ENCODE measurements at regions of chr16 and their contacts with region 1.

Region 1: GRCh38 chr16:87636072-87636684 is 33.9 kb downstream of the JPH3 start:
- DNase-seq: peak; percentile 83 to 89 (median 84)
- ATAC-seq: peak; percentile 98
- H3K4me3 ChIP-seq: no peak overlapping the region
- H3K27ac ChIP-seq: no peak overlapping the region
- H3K4me1 ChIP-seq: peaks cover 0 to 18% of the 10 kb centered on the region in 2 experiments; a peak in 3 of 5 replicates
- H3K27me3 ChIP-seq: peaks cover 36 to 79% of the 10 kb centered on the region in 2 experiments
- CTCF ChIP-seq: peak; percentile 83 to 88 (median 88)
- EP300 ChIP-seq: no peak
- POLR2A ChIP-seq: no peak
- RAD21 ChIP-seq: peak; percentile 86 to 92

Region 2: DNA sequence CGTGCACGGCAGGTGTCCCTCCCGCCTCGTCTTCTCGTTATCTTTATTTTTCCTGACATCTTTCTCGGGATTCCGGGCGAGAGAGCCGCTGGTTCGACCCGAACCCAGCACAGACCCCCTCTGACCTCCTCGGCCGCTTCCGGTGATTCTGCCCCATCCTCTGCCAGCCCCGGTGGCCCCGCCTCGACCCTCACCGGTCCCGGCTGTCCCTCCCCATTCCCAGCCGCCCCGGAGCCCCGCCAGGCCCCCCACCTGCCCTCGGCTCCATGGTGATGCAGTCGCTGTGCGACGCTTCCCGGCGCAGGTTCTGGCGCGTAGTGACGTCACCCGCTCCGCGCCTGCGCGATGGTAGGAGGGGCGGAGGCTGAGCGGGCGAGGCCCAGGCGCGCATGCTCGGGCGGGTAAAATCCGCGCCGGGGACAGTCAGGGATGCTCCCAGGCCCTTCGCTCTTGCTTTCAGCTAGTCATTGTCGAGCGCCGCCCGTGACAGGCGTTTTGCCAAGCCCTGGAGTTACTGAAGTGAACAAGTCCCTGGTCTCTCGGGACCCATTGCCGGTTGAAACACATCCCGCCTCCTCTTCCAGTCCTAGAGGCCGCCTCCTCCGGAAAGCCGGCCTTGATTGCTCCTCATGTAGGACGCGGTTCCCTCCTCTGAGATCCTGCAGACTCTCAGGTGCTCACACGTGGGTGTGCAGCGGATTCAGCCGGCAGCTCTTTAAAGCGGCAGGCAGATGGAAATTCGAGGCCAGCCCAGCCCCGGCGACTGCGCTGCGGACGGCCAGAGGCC is 1081.1 kb before region 1 on chr16 and contains the start of gene MTHFSD:
- CTCF ChIA-PET with region 1: no interaction called
- POLR2A ChIA-PET with region 1: no interaction called
- in situ Hi-C with region 1: loop called (anchors 25 kb)
- intact Hi-C with region 1: loop called (anchors 5 kb)
- DNase-seq: peak; percentile 94 to 99 (median 98)
- ATAC-seq: peak; percentile 97
- H3K4me3 ChIP-seq: peak within 1 kb of the TSS; percentile 91
- H3K27ac ChIP-seq: peak within 1 kb of the TSS; percentile 85
- H3K4me1 ChIP-seq: peaks cover 0 to 18% of the 10 kb centered on the region in 2 experiments; a peak in 3 of 5 replicates
- H3K27me3 ChIP-seq: peaks cover 14 to 15% of the 10 kb centered on the region in 2 experiments; a peak in 3 of 5 replicates
- CTCF ChIP-seq: no peak
- EP300 ChIP-seq: no peak
- POLR2A ChIP-seq: peak; percentile 81
- RAD21 ChIP-seq: no peak
- polyA plus RNA-seq, gene MTHFSD: 3.2 to 3.5 TPM

Region 3: DNA sequence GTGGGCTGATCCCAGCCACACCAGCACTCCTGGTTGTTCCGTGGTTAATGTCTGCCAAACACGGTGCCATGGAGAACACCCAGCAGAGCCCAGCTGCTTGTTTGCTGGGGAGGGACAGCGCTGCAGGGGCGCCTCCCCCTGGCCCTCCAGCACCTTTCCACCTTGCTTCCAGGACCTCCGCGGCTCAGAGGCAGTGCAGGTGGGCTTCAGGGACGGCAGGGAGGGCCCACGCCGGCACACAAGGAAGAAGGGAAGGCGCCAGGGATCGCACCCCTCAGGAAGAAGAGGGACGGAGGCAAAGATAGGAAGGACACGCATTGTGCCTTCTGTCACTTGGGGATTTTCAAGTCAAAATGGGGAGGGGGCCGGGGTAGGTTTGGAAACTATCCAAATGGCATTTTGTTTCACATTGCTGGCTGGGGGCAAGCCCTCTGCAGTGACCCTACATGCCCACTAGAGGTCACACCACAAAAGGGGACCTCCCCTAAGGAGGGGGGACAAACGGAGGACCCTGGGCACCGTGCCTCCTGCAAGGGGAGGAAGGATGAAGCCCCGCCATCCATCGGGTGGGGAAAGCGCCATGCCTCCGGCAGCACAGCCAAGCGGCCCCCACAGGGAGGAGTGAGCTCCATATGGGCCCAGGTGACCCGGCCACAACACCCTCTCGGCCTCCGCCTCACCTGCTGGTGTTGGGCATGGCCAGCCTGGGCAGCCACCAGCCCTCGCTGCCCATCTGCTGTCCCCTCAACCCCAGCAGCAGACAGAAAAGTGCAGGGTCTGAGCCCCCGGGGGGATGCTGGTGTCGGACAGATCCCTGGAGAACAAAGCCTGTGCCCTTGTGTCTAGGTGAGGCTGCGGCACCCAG is 311.5 kb before region 1 on chr16:
- CTCF ChIA-PET with region 1: no interaction called
- POLR2A ChIA-PET with region 1: no interaction called
- in situ Hi-C with region 1: no loop called
- intact Hi-C with region 1: loop called (anchors 10 kb)
- DNase-seq: peak; percentile 48 to 79 (median 76)
- ATAC-seq: peak; percentile 82
- H3K4me3 ChIP-seq: no peak overlapping the region
- H3K27ac ChIP-seq: no peak overlapping the region
- H3K4me1 ChIP-seq: peaks cover 0 to 31% of the 10 kb centered on the region in 2 experiments; a peak in 2 of 5 replicates
- H3K27me3 ChIP-seq: no peaks in the 10 kb centered on the region
- CTCF ChIP-seq: peak; percentile 67 to 90 (median 81)
- EP300 ChIP-seq: no peak
- POLR2A ChIP-seq: no peak
- RAD21 ChIP-seq: peak; percentile 43 to 72

Region 4: DNA sequence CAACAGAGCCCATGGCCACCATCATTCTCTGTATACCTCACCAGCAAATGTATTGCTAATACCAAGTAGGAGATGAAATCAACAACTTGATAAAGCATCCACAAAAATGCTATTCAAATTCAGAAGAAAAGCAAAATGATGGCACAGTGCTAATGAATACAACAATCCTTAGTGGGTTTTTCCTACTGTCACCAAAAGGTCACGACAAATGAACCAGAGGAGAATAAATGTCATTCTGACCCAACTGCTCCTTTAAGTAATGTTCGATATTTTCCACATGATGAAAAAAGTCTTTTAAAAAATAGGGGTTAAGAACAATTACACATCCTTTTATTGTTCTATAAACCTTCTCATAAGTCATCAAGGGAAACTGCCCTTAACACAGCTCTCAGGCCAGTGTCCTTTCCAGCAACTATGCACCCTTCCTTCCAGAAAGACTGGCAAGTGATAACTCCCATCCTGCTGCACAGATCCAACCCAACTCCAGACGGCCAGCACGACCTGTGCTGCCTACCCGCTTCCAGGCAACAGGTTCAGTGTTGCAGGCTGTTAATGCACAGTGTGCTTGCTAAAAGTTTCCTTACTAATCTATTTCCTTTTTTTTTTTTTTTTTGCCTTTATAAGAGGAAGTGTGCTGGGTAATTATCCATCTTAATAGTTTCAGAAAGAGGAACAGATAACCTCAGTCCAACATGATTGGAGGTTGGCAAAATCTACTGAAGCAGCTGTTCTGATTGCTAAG is 268.0 kb before region 1 on chr16:
- CTCF ChIA-PET with region 1: no interaction called
- POLR2A ChIA-PET with region 1: no interaction called
- in situ Hi-C with region 1: no loop called
- intact Hi-C with region 1: no loop called
- DNase-seq: no peak
- ATAC-seq: no peak
- H3K4me3 ChIP-seq: no peak overlapping the region
- H3K27ac ChIP-seq: no peak overlapping the region
- H3K4me1 ChIP-seq: peaks cover 17 to 27% of the 10 kb centered on the region in 2 experiments
- H3K27me3 ChIP-seq: no peaks in the 10 kb centered on the region
- CTCF ChIP-seq: no peak
- EP300 ChIP-seq: no peak
- POLR2A ChIP-seq: no peak
- RAD21 ChIP-seq: no peak

Region 5: GRCh38 chr16:87416826-87417527 is 219.2 kb before region 1 on chr16:
- CTCF ChIA-PET with region 1: interaction called, 17 read pairs
- POLR2A ChIA-PET with region 1: no interaction called
- in situ Hi-C with region 1: no loop called
- intact Hi-C with region 1: no loop called
- DNase-seq: peak in 1 of 4 experiments; percentile 27
- ATAC-seq: no peak
- H3K4me3 ChIP-seq: no peak overlapping the region
- H3K27ac ChIP-seq: no peak overlapping the region
- H3K4me1 ChIP-seq: peaks cover 0 to 4% of the 10 kb centered on the region in 2 experiments; a peak in 2 of 5 replicates
- H3K27me3 ChIP-seq: no peaks in the 10 kb centered on the region; a peak in 1 of 5 replicates
- CTCF ChIP-seq: peak; percentile 32 to 63 (median 49); a peak in 4 of 6 replicates
- EP300 ChIP-seq: no peak
- POLR2A ChIP-seq: no peak
- RAD21 ChIP-seq: peak; percentile 42 to 65; a peak in 3 of 4 replicates

Region 6: GRCh38 chr16:87586201-87586782 is 49.9 kb before region 1 on chr16:
- CTCF ChIA-PET with region 1: interaction called, 22 read pairs
- POLR2A ChIA-PET with region 1: interaction called, 4 read pairs
- in situ Hi-C with region 1: loop called (anchors 5 kb)
- intact Hi-C with region 1: loop called (anchors 2 kb)
- DNase-seq: peak in 1 of 4 experiments; percentile 41
- ATAC-seq: peak; percentile 34
- H3K4me3 ChIP-seq: no peak overlapping the region
- H3K27ac ChIP-seq: no peak overlapping the region
- H3K4me1 ChIP-seq: peaks cover 18 to 31% of the 10 kb centered on the region in 2 experiments; a peak in 4 of 5 replicates
- H3K27me3 ChIP-seq: peaks cover 50 to 82% of the 10 kb centered on the region in 2 experiments
- CTCF ChIP-seq: no peak
- EP300 ChIP-seq: no peak
- POLR2A ChIP-seq: no peak
- RAD21 ChIP-seq: no peak

Region 7: DNA sequence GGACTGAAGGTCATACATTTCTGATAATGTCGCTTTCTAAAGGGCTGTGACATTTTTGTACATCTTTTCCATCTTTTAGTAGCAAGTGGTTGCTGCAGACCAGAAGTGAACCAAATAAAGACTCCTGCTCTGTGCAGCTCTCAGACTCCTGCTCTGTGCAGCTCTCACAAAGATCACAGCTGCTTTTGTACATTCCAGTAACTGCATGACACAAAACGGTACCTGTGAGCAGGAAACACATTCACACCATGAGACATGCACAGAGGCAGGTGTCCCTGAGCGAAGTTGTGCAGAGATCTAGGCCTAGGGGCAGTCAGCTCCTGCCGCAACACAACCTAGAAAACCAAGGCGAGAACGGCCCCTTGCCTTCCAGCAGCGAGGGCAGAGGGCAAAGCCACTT is 62.1 kb after region 1 on chr16:
- CTCF ChIA-PET with region 1: no interaction called
- POLR2A ChIA-PET with region 1: no interaction called
- in situ Hi-C with region 1: no loop called
- intact Hi-C with region 1: no loop called
- DNase-seq: no peak
- ATAC-seq: no peak
- H3K4me3 ChIP-seq: no peak overlapping the region
- H3K27ac ChIP-seq: no peak overlapping the region
- H3K4me1 ChIP-seq: peaks cover 0 to 35% of the 10 kb centered on the region in 2 experiments; a peak in 2 of 5 replicates
- H3K27me3 ChIP-seq: no peaks in the 10 kb centered on the region
- CTCF ChIP-seq: no peak
- EP300 ChIP-seq: no peak
- POLR2A ChIP-seq: no peak
- RAD21 ChIP-seq: no peak

Measured in K562 (cell line).